ENCODE measurements at regions of chr11 and their contacts with region 1.

Region 1: GRCh38 chr11:62081378-62082291 is 42.2 kb upstream of the INCENP start:
- DNase-seq: peak; percentile 90
- H3K4me3 Mint-ChIP-seq: no peak overlapping the region
- H3K27ac Mint-ChIP-seq: no peak overlapping the region
- H3K4me1 Mint-ChIP-seq: peaks cover 6% of the 10 kb centered on the region
- H3K27me3 Mint-ChIP-seq: peaks cover 4% of the 10 kb centered on the region

Region 2: DNA sequence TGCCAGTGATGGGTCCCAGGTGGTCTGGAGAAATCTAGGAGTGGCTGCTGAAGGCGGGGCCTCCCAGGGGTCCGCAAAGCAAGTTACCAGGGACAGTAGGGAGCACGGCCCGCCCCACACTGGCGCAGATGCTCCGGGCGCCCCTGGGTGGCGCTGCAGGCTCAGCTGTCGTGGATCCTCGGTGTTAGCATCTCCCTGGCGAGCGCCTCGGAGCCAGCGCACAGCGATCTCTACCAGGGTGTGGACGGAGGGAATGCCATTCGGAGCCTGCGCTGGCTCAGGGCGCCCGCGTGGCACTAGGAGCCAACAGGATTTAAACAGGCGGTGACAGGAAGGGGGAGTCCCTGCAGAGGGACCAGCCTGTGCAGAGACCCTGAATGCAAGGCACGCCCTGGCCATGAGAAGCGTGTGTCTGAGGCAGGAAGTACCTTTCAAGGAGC is 210.5 kb before region 1 on chr11:
- CTCF ChIA-PET with region 1: interaction called, 47 read pairs
- POLR2A ChIA-PET with region 1: no interaction called
- intact Hi-C with region 1: loop called (anchors 1 kb)
- DNase-seq: peak; percentile 80
- H3K4me3 Mint-ChIP-seq: no peak overlapping the region
- H3K27ac Mint-ChIP-seq: no peak overlapping the region
- H3K4me1 Mint-ChIP-seq: peaks cover 2% of the 10 kb centered on the region
- H3K27me3 Mint-ChIP-seq: peaks cover 2% of the 10 kb centered on the region

Region 3: GRCh38 chr11:61927501-61927900 is 154.1 kb before region 1 on chr11:
- CTCF ChIA-PET with region 1: interaction called, 11 read pairs
- POLR2A ChIA-PET with region 1: no interaction called
- intact Hi-C with region 1: no loop called
- DNase-seq: no peak
- H3K4me3 Mint-ChIP-seq: no peak overlapping the region
- H3K27ac Mint-ChIP-seq: no peak overlapping the region
- H3K4me1 Mint-ChIP-seq: no peaks in the 10 kb centered on the region
- H3K27me3 Mint-ChIP-seq: peaks cover 3% of the 10 kb centered on the region

Region 4: DNA sequence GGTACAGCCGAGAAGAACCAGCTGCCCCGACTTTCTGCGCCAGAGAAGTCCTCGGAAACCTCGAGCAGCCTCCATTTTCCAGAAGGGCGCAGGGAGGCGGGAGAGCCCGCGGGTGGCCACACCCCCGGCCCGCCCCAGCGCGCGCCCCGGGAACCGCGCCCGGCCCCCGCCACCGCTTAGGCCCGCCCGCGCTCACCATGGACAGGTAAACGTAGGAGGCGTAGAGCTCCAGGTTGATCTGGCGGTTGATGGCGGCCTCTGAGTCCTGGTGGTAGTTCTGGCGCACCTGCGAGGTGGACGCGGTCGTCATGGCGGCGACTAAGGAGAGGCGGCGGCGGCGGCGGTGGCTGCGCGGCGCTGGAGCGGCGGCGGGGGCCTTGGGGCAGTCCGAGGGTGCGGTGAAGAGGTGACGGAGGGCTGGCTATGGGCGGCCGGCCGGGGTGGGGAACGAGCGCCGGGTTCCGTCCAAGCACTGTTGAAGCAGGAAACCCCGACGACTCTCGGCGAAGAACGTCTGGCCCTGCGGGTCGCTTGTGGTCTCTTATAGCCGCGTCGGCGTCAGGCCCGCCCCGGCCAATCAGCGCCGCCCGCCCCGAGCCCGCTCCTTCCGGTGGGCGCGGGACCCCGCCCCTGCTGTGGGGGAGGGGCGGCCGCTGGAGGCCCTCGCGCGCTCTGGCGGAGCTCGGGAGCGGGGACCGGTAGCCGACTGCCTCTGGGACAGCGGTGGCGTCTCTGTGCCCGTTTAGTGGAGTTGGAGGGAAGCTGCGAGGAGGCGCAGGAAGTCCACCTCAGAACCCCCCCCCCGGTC is 114.3 kb before region 1 on chr11 and contains the start of gene FTH1:
- CTCF ChIA-PET with region 1: interaction called, 17 read pairs
- POLR2A ChIA-PET with region 1: interaction called, 11 read pairs
- intact Hi-C with region 1: loop called (anchors 1 kb)
- DNase-seq: peak; percentile 90
- H3K4me3 Mint-ChIP-seq: peak within 1 kb of the TSS; percentile 84
- H3K27ac Mint-ChIP-seq: peak within 1 kb of the TSS; percentile 93
- H3K4me1 Mint-ChIP-seq: peaks cover 68% of the 10 kb centered on the region
- H3K27me3 Mint-ChIP-seq: no peaks in the 10 kb centered on the region
- total RNA-seq, gene FTH1: 915 to 922 TPM

Region 5: DNA sequence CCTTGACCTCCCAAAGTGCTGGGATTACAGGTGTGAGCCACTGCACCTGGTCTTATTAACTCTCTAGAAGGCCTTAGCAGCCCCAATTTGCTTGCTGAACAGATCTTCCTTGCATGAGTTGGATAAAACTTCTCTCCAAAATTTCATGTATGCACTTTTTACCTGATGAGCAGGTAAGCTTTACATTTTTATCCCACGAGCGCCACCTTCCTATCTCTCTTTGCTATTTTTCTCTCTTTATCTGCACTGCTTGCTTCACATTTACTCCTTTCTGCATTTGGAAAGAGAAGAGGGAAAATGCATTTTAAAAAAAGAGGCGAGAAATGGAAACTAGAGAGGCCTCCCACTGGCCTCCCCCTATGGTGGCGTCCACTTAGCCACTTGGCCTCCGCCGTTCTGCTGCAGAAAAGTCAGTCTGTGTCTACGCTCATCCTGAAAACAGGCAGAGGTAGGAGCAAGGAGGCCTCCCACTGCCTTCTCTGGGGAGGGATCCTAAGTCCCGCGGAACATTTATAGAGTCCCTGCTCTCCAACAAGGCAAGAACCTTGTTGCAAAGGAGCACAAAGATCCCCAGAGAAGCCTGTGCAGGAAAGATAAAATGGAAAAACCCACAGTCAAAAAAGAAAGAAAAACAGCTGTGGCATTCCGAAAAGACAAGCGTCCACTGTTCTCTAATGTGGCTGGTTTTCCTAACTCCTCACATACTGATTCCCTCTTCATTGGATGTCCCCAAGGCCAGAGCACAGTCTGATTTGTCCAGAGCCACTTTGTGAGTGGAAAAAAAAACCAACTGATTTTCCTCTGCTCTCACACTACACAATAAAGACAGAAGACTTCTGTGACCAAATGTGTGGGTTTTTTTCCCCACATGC is 20.0 kb before region 1 on chr11:
- CTCF ChIA-PET with region 1: interaction called, 11 read pairs
- POLR2A ChIA-PET with region 1: no interaction called
- intact Hi-C with region 1: no loop called
- DNase-seq: no peak
- H3K4me3 Mint-ChIP-seq: no peak overlapping the region
- H3K27ac Mint-ChIP-seq: no peak overlapping the region
- H3K4me1 Mint-ChIP-seq: no peaks in the 10 kb centered on the region
- H3K27me3 Mint-ChIP-seq: no peaks in the 10 kb centered on the region

Region 6: GRCh38 chr11:62137276-62137861 is 55.7 kb after region 1 on chr11:
- CTCF ChIA-PET with region 1: no interaction called
- POLR2A ChIA-PET with region 1: no interaction called
- intact Hi-C with region 1: no loop called
- DNase-seq: no peak
- H3K4me3 Mint-ChIP-seq: no peak overlapping the region
- H3K27ac Mint-ChIP-seq: no peak overlapping the region
- H3K4me1 Mint-ChIP-seq: peaks cover 13% of the 10 kb centered on the region
- H3K27me3 Mint-ChIP-seq: no peaks in the 10 kb centered on the region

Region 7: DNA sequence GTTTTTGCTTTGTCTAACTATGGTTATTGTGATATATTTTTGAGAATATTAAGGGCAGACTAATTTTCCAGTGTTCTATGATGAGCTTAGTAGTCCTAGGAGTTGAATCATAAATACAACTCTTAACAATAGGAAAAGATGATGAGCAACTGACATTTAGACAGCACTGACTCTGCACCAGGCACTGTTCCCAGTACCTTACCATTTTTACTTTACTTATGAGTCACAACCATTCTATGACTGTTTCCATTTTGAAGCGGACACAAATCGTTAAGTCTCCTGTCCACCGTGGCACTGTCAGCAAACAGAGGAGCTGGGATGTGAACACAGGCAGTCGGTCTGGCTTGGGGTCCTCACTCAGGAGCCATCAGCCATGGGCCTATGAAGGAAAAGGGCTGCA is 184.9 kb after region 1 on chr11:
- CTCF ChIA-PET with region 1: no interaction called
- POLR2A ChIA-PET with region 1: no interaction called
- intact Hi-C with region 1: no loop called
- DNase-seq: peak; percentile 43
- H3K4me3 Mint-ChIP-seq: no peak overlapping the region
- H3K27ac Mint-ChIP-seq: peak overlapping the region; percentile 74
- H3K4me1 Mint-ChIP-seq: peaks cover 22% of the 10 kb centered on the region
- H3K27me3 Mint-ChIP-seq: peaks cover 25% of the 10 kb centered on the region

Region 8: DNA sequence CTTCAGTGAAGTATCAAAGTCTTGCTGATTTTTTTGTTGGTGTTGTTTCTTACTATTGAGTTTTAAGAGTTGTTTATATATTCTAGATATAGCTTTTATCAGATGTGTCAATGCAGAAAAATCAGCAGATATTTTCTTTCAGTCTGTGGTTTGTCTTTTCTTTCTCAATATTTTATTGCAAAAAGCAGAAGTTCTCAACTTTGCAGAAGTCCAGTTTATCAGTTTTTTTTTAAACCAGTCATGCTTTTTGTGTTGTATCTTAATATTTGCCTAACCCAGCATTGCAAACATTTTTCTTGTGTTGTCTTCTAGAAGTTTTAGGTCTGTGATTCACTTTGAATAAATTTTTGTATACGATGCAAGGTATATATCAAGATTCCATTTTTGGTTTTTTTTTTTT is 262.6 kb after region 1 on chr11:
- CTCF ChIA-PET with region 1: no interaction called
- POLR2A ChIA-PET with region 1: no interaction called
- intact Hi-C with region 1: no loop called
- DNase-seq: no peak
- H3K4me3 Mint-ChIP-seq: no peak overlapping the region
- H3K27ac Mint-ChIP-seq: no peak overlapping the region
- H3K4me1 Mint-ChIP-seq: no peaks in the 10 kb centered on the region
- H3K27me3 Mint-ChIP-seq: no peaks in the 10 kb centered on the region